ENCODE measurements at regions of chr3 and their contacts with region 1.

Region 1: DNA sequence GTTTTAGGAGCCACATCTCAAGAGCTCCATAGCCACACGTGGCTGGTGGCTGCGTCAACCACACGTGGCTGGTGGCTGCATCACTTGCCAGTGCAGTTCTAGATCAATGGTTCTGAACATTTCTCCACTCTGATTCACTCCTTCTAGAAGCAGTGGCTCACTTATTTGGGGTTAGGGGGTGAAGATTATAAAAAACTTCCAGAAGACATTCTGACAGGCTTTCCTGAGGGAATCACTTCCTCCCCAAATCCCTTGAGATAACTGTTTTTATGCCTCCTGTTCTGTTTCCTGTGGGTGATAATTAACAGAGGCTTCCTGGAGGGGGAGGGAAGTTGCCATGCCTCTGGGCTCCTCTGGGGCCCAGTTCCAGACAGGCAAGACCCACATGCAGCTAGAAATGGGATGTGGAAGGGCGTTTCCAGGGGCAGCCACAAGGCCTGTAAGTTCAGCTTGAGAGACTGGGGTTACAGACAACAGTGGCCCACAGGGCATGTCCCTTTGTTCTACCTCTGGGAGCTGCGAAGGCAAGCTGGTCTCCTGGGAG is 23.6 kb downstream of the HEG1 start:
- DNase-seq: peak; percentile 36
- H3K4me3 ChIP-seq: no peak overlapping the region
- H3K27ac ChIP-seq: peak overlapping the region; percentile 6
- H3K4me1 ChIP-seq: peaks cover 14% of the 10 kb centered on the region
- H3K27me3 ChIP-seq: no peaks in the 10 kb centered on the region
- CTCF ChIP-seq: peak in 1 of 2 donors; percentile 2
- POLR2A ChIP-seq: no peak

Region 2: GRCh38 chr3:124860599-124860998 is 171.6 kb before region 1 on chr3:
- CTCF ChIA-PET with region 1: no interaction called
- POLR2A ChIA-PET with region 1: no interaction called
- dilution Hi-C with region 1: no loop called
- intact Hi-C with region 1: no loop called
- DNase-seq: peak; percentile 89
- H3K4me3 ChIP-seq: no peak overlapping the region
- H3K27ac ChIP-seq: peak overlapping the region; percentile 61
- H3K4me1 ChIP-seq: peaks cover 34% of the 10 kb centered on the region
- H3K27me3 ChIP-seq: no peaks in the 10 kb centered on the region
- CTCF ChIP-seq: no peak
- POLR2A ChIP-seq: no peak

Region 3: GRCh38 chr3:124873226-124873625 is 158.9 kb before region 1 on chr3:
- CTCF ChIA-PET with region 1: no interaction called
- POLR2A ChIA-PET with region 1: no interaction called
- dilution Hi-C with region 1: no loop called
- intact Hi-C with region 1: no loop called
- DNase-seq: no peak
- H3K4me3 ChIP-seq: no peak overlapping the region
- H3K27ac ChIP-seq: no peak overlapping the region
- H3K4me1 ChIP-seq: peaks cover 11% of the 10 kb centered on the region
- H3K27me3 ChIP-seq: no peaks in the 10 kb centered on the region
- CTCF ChIP-seq: no peak
- POLR2A ChIP-seq: no peak

Region 4: GRCh38 chr3:125042725-125043406 is 10.7 kb after region 1 on chr3:
- CTCF ChIA-PET with region 1: interaction called, 7 read pairs
- POLR2A ChIA-PET with region 1: no interaction called
- dilution Hi-C with region 1: no loop called
- intact Hi-C with region 1: loop called (anchors 1 kb)
- DNase-seq: peak; percentile 64
- H3K4me3 ChIP-seq: no peak overlapping the region
- H3K27ac ChIP-seq: peak overlapping the region; percentile 77
- H3K4me1 ChIP-seq: peaks cover 56% of the 10 kb centered on the region
- H3K27me3 ChIP-seq: no peaks in the 10 kb centered on the region
- CTCF ChIP-seq: no peak
- POLR2A ChIP-seq: no peak